ENCODE measurements at regions of chr17 and their contacts with region 1.

Region 1: GRCh38 chr17:21252796-21253645 is at the start of gene NATD1:
- DNase-seq: peak; percentile 88 to 93
- ATAC-seq: peak; percentile 63 to 77
- H3K4me3 ChIP-seq: peak within 1 kb of the TSS; percentile 77
- H3K27ac ChIP-seq: peak within 1 kb of the TSS; percentile 52 to 77
- H3K4me1 ChIP-seq: peaks cover 10% of the 10 kb centered on the region
- CTCF ChIP-seq: no peak
- EP300 ChIP-seq: no peak
- POLR2A ChIP-seq: no peak
- RAD21 ChIP-seq: no peak
- polyA plus RNA-seq, gene NATD1: 1.1 and 1.5 TPM in 2 replicates

Region 2: GRCh38 chr17:21239680-21240368 is 13.2 kb before region 1 on chr17:
- CTCF ChIA-PET with region 1: interaction called, 52 read pairs
- POLR2A ChIA-PET with region 1: no interaction called
- DNase-seq: peak; percentile 47 to 84
- ATAC-seq: peak; percentile 57 to 82; a peak in 4 of 6 replicates
- H3K4me3 ChIP-seq: no peak overlapping the region
- H3K27ac ChIP-seq: no peak overlapping the region
- H3K4me1 ChIP-seq: no peaks in the 10 kb centered on the region
- CTCF ChIP-seq: peak; percentile 40
- EP300 ChIP-seq: no peak
- POLR2A ChIP-seq: no peak
- RAD21 ChIP-seq: peak in 1 of 2 experiments; percentile 33; a peak in 1 of 5 replicates

Measured in A549 (cell line).